ENCODE measurements at regions of chr2 and their contacts with region 1.

Region 1: DNA sequence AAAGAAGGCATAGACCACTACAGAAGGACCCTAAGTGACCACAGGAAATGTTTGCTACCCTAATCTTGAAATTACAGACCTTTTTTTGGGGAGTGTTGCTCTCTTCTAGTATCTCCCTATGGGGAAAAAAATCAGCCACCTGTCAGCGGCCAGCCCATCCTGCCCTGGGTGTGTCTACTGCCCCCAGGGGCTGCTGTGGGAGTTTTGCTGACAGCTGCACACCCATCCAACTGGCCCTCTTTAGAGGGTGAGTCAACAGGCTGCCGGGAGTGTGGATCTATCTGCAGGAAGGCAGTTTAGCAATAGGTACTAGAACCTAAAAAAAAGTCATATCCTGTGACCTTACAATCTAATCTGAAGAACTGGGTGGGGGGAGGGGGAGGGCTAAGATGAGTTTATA is 796 bp upstream of the DYSF start:
- DNase-seq: no peak
- H3K4me3 ChIP-seq: peak overlapping the region in 1 of 4 experiments; percentile 62; a peak in 2 of 8 replicates
- H3K27ac ChIP-seq: no peak overlapping the region
- H3K4me1 ChIP-seq: peaks cover 24 to 33% (median 27%) of the 10 kb centered on the region in 4 experiments
- H3K27me3 ChIP-seq: peaks cover 0 to 23% (median 17%) of the 10 kb centered on the region in 4 experiments; a peak in 6 of 7 replicates
- CTCF ChIP-seq: peak; percentile 48 to 49 (median 48)
- EP300 ChIP-seq: no peak
- POLR2A ChIP-seq: no peak
- RAD21 ChIP-seq: peak; percentile 27 to 42; a peak in 2 of 4 replicates

Region 2: DNA sequence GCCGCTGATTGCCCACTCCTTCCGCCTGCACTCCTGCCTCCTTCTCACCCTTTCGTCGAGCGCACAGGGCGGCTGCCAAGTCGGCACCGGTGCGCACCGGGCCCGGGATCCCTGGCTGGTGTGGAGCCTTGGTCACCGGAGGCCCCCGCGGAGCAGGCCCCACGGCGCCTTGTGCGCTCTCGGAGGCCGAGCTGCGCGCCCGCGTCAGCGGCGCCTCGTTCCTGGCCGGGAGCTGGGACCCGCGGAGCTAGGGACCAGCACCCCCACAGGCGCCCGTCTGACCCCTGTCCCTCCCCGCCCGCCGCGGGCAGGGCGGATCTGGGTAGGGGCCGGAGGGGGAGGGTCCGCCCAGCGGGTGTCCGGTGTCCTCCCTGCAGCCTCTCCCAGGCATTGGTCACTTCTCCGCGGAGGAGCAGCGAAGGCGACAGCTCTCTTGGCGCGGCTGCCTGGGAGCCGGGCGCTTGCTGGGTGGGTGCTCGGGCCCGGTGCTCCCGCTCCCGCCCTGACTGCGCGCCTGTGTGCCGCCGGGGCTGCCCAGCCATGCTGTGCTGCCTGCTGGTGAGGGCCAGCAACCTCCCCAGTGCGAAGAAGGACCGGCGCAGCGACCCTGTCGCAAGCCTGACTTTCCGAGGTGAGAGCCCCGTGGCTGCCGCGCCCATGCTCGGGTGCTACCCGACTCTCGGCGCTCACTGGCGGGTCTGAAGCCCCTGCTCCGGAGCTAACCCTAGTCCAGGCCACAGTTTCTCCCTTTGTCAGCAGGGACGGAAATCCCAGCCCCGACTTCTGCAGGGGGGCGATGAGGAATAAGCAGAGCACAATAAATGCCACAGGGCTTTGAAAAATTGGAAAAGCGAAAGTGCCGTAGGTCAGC is 14.0 kb after region 1 on chr2:
- CTCF ChIA-PET with region 1: interaction called, 73 read pairs
- POLR2A ChIA-PET with region 1: interaction called, 51 read pairs
- DNase-seq: peak in 1 of 2 experiments; percentile 72
- H3K4me3 ChIP-seq: peak overlapping the region; percentile 35 to 62 (median 56)
- H3K27ac ChIP-seq: no peak overlapping the region
- H3K4me1 ChIP-seq: peaks cover 0 to 12% (median 4%) of the 10 kb centered on the region in 4 experiments; a peak in 4 of 7 replicates
- H3K27me3 ChIP-seq: peaks cover 41 to 78% (median 78%) of the 10 kb centered on the region in 4 experiments
- CTCF ChIP-seq: no peak
- EP300 ChIP-seq: no peak
- POLR2A ChIP-seq: no peak
- RAD21 ChIP-seq: no peak